ENCODE measurements at regions of chr5 and their contacts with region 1.

Region 1: GRCh38 chr5:90640484-90641059 is 82.0 kb downstream of the ADGRV1 start:
- DNase-seq: peak in 1 of 4 experiments; percentile 78
- ATAC-seq: peak; percentile 58
- H3K4me3 ChIP-seq: peak overlapping the region; percentile 1; the same call in 1 of the 2 replicates
- H3K27ac ChIP-seq: peak overlapping the region; percentile 93
- H3K4me1 ChIP-seq: peaks cover 0 to 29% of the 10 kb centered on the region in 2 experiments; a peak in 4 of 5 replicates
- H3K27me3 ChIP-seq: no peaks in the 10 kb centered on the region
- CTCF ChIP-seq: no peak
- EP300 ChIP-seq: peak; percentile 13; the same call in 1 of the 2 replicates
- POLR2A ChIP-seq: no peak
- RAD21 ChIP-seq: no peak

Region 2: DNA sequence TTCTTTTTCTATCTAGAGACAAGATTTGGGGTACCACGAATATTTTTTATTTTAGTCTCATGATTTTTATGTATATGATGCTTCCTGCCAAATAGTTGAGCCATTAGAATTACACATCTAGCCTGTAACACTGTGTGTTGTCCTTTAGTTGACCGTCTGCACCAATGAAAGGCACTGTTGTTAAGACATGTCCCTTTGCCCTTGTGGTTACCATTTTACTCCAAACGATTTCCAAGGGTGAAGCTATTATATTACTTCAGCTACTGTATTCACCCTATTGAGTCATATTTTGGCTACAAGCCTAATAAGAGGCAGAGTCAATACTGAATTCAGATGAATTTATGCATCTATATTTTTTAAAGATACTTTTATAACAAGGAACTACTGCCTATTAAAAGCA is 438.6 kb before region 1 on chr5:
- CTCF ChIA-PET with region 1: no interaction called
- POLR2A ChIA-PET with region 1: no interaction called
- in situ Hi-C with region 1: no loop called
- intact Hi-C with region 1: no loop called
- DNase-seq: no peak
- ATAC-seq: no peak
- H3K4me3 ChIP-seq: no peak overlapping the region
- H3K27ac ChIP-seq: no peak overlapping the region
- H3K4me1 ChIP-seq: no peaks in the 10 kb centered on the region
- H3K27me3 ChIP-seq: no peaks in the 10 kb centered on the region
- CTCF ChIP-seq: no peak
- EP300 ChIP-seq: no peak
- POLR2A ChIP-seq: no peak
- RAD21 ChIP-seq: no peak

Region 3: DNA sequence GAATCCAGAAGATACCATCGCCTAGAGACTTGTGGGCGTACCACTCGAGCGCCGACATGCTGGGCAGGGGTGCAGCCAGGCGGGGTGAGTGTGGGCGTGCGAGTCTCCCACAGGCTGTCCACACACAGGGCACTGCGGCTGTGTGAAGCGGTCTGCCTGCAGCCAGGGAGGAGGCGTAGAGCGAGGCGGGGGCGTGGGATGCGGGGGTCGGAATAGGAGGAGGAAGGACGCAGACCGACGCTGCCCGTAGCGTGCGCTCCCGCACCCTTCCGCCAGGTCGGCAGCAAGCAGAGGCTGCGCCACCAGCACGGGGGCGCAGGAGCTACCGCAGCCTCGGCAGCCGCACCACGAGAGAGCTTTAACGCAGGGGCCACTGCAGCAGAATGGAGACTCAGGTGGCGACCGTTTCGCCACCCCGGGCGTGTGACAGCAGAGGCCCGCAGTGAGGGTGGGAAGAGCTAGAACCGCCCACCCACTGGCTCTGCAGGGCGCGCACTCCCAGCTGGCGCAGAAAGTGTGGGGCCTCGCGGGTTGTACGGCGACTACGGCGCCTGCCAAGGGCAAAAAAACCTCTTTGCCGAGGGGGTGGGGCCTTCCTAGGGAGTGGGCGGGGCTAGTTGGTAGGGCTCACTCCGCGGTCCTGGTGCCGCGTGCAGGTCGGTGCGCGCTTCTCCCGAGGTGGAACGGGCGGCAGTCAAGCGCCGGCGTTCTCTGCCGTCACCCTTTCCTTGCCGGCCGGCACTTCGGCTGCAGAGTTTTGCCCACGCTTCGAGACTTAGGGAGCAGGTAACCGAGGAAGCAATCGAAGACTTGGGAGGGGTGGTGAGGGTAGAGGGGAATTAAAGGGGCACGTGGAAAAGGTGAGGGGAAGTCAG is 166.1 kb before region 1 on chr5 and contains the starts of genes MBLAC2 and POLR3G:
- CTCF ChIA-PET with region 1: no interaction called
- POLR2A ChIA-PET with region 1: no interaction called
- in situ Hi-C with region 1: no loop called
- intact Hi-C with region 1: no loop called
- DNase-seq: peak; percentile 92 to 96 (median 94)
- ATAC-seq: peak; percentile 86
- H3K4me3 ChIP-seq: peak within 1 kb of the TSS; percentile 65
- H3K27ac ChIP-seq: peak within 1 kb of the TSS; percentile 92
- H3K4me1 ChIP-seq: peaks cover 16 to 25% of the 10 kb centered on the region in 2 experiments; a peak in 4 of 5 replicates
- H3K27me3 ChIP-seq: no peaks in the 10 kb centered on the region
- CTCF ChIP-seq: peak; percentile 36 to 84 (median 52)
- EP300 ChIP-seq: no peak; the same call in 1 of the 2 replicates
- POLR2A ChIP-seq: peak; percentile 95
- RAD21 ChIP-seq: no peak
- polyA plus RNA-seq, gene MBLAC2: 2.4 to 3.2 TPM
- polyA plus RNA-seq, gene POLR3G: 95.1 to 111 TPM

Region 4: GRCh38 chr5:90612919-90613318 is 27.7 kb before region 1 on chr5:
- CTCF ChIA-PET with region 1: no interaction called
- POLR2A ChIA-PET with region 1: interaction called, 3 read pairs
- in situ Hi-C with region 1: no loop called
- intact Hi-C with region 1: loop called (anchors 2 kb)
- DNase-seq: peak in 1 of 4 experiments; percentile 36
- ATAC-seq: peak; percentile 76
- H3K4me3 ChIP-seq: 0 out of 2 replicates have a peak overlapping the region, but pooled peaks have one; percentile 5
- H3K27ac ChIP-seq: peak overlapping the region; percentile 63
- H3K4me1 ChIP-seq: peaks cover 0 to 10% of the 10 kb centered on the region in 2 experiments; a peak in 2 of 5 replicates
- H3K27me3 ChIP-seq: no peaks in the 10 kb centered on the region
- CTCF ChIP-seq: no peak
- EP300 ChIP-seq: no peak
- POLR2A ChIP-seq: no peak
- RAD21 ChIP-seq: no peak

Region 5: GRCh38 chr5:90650767-90651166 is 10.2 kb after region 1 on chr5:
- CTCF ChIA-PET with region 1: no interaction called
- POLR2A ChIA-PET with region 1: interaction called, 12 read pairs
- in situ Hi-C with region 1: no loop called
- intact Hi-C with region 1: no loop called
- DNase-seq: no peak
- ATAC-seq: peak; percentile 41
- H3K4me3 ChIP-seq: 0 out of 2 replicates have a peak overlapping the region, but pooled peaks have one; percentile 5
- H3K27ac ChIP-seq: peak overlapping the region; percentile 48; the same call in 2 of the 3 replicates
- H3K4me1 ChIP-seq: peaks cover 6 to 39% of the 10 kb centered on the region in 2 experiments
- H3K27me3 ChIP-seq: no peaks in the 10 kb centered on the region
- CTCF ChIP-seq: no peak
- EP300 ChIP-seq: no peak
- POLR2A ChIP-seq: no peak
- RAD21 ChIP-seq: no peak

Region 6: DNA sequence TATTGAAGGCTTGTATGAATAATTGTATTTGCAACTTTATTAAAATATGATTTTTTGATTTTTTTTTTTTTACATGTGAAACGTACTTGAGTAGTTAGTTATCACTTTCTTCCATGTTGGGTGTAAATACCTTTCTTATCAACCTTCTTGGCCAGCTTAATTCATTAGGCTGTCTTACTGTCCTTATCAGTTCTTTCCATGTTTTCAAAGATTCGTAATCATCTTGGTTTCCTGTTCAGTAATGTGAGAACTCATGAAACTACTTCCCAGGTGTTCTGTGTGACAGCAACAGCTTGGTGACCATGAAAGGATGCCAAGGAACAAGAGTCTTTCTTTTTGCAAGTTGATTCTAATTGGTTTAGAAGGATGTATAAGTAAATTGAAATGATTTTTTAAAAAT is 18.0 kb after region 1 on chr5:
- CTCF ChIA-PET with region 1: no interaction called
- POLR2A ChIA-PET with region 1: interaction called, 12 read pairs
- in situ Hi-C with region 1: no loop called
- intact Hi-C with region 1: loop called (anchors 1 kb)
- DNase-seq: peak; percentile 69 to 88 (median 76)
- ATAC-seq: peak; percentile 69
- H3K4me3 ChIP-seq: peak overlapping the region; percentile 39
- H3K27ac ChIP-seq: peak overlapping the region; percentile 84
- H3K4me1 ChIP-seq: peaks cover 6 to 33% of the 10 kb centered on the region in 2 experiments; a peak in 4 of 5 replicates
- H3K27me3 ChIP-seq: no peaks in the 10 kb centered on the region
- CTCF ChIP-seq: no peak
- EP300 ChIP-seq: peak; percentile 99
- POLR2A ChIP-seq: peak; percentile 37; the same call in 1 of the 2 replicates
- RAD21 ChIP-seq: no peak

Region 7: GRCh38 chr5:90759119-90759518 is 118.5 kb after region 1 on chr5:
- CTCF ChIA-PET with region 1: no interaction called
- POLR2A ChIA-PET with region 1: no interaction called
- in situ Hi-C with region 1: no loop called
- intact Hi-C with region 1: no loop called
- DNase-seq: no peak
- ATAC-seq: no peak
- H3K4me3 ChIP-seq: no peak overlapping the region
- H3K27ac ChIP-seq: no peak overlapping the region
- H3K4me1 ChIP-seq: no peaks in the 10 kb centered on the region
- H3K27me3 ChIP-seq: no peaks in the 10 kb centered on the region
- CTCF ChIP-seq: no peak
- EP300 ChIP-seq: no peak
- POLR2A ChIP-seq: no peak
- RAD21 ChIP-seq: no peak

Measured in K562 (cell line).